Mammary epithelial cell (primary cell): ENCODE measurements at regions of chr1 and their contacts with region 1.

Region 1: DNA sequence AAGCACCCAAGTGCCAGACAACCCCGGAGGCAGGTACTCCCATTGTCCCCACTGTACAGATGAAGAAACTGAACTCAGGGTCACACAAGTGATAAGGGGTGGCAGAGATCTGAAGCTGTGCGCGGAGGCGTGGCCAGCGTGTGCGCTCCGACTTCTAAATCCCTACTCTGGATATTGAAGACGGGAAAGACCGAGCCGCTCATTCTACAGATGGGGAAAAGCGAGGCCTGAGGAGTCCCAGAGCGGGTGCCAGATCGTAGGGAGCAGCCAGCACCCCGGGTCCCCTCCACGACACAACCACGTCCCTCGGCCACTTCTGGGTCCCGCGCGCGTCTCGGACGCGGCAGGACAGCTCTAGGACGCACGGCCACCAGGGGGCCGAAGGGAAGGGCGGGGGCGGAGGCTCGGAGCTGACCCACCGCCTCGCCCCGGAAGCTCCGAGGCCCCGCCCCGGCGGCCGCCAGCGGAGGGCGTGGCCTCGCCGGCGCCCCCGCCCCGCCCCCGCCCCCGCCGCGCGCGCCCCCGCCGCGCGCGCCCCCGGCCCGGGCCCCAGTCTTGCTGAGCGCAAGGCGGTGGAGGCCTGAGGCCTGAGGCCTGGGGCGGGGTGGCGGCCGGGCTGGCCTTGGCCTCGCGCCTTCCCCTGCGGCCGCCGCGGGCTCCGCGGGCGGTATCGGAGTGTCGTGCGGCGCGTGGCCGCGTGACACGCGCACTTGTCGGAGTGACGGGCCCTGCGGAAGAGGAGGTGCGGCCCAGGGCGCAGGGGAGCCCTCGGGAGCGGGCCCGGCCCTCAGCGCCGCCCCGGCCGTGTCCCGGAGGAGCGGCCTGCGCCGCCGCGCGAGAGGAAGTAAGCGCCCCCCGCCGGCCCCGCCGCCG is at the start of gene H6PD:
- DNase-seq: peak; percentile 74
- H3K4me3 ChIP-seq: peak within 1 kb of the TSS; percentile 52 to 66 (median 65)
- H3K27ac ChIP-seq: peak within 1 kb of the TSS; percentile 64
- H3K4me1 ChIP-seq: peaks cover 29% of the 10 kb centered on the region
- H3K27me3 ChIP-seq: no peaks in the 10 kb centered on the region
- CTCF ChIP-seq: peak; percentile 37 to 75
- total RNA-seq, gene H6PD: 12.6 to 18.0 TPM

Region 2: DNA sequence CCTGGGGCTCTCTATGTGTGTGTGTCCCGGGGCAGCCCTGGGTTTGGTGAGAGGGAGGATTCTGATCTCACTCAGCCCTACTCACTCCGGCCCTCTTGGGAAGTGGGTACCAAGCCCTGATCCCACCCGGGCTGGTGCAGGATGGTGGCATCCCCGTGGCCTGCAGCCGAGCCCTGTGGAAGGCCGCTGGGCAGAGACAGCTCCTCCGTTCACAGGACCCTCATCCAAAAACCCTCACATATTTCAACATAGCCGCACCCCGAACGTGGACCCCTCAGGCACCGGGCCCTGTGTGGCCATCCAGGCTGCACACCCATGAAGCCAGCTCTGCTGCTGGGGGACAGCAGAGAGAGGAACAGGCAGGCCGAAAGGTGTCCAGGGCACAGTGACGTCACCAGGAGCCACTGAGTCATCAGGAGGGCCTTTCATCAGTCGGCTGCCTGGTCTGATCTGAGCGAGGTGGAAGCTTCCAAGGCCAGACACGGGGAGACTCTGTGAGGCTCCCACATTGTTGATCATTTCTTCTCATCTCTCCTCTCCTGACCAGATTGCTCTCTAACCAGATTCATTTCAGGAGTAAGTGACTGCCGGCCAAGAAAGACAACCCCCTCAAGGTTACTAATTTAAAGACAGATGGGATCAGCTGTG is 89.3 kb before region 1 on chr1:
- CTCF ChIA-PET with region 1: no interaction called
- dilution Hi-C with region 1: no loop called
- in situ Hi-C with region 1: no loop called
- intact Hi-C with region 1: no loop called
- DNase-seq: peak; percentile 23
- H3K4me3 ChIP-seq: no peak overlapping the region
- H3K27ac ChIP-seq: no peak overlapping the region
- H3K4me1 ChIP-seq: peaks cover 5% of the 10 kb centered on the region
- H3K27me3 ChIP-seq: no peaks in the 10 kb centered on the region
- CTCF ChIP-seq: no peak

Region 3: GRCh38 chr1:9155879-9156278 is 78.6 kb before region 1 on chr1:
- CTCF ChIA-PET with region 1: no interaction called
- dilution Hi-C with region 1: loop called (anchors 5 kb)
- in situ Hi-C with region 1: no loop called
- intact Hi-C with region 1: no loop called
- DNase-seq: no peak
- H3K4me3 ChIP-seq: no peak overlapping the region
- H3K27ac ChIP-seq: no peak overlapping the region
- H3K4me1 ChIP-seq: no peaks in the 10 kb centered on the region
- H3K27me3 ChIP-seq: no peaks in the 10 kb centered on the region
- CTCF ChIP-seq: no peak

Region 4: GRCh38 chr1:9181176-9181906 is 53.1 kb before region 1 on chr1:
- CTCF ChIA-PET with region 1: no interaction called
- dilution Hi-C with region 1: no loop called
- in situ Hi-C with region 1: no loop called
- intact Hi-C with region 1: loop called (anchors 2 kb)
- DNase-seq: peak; percentile 52
- H3K4me3 ChIP-seq: peak overlapping the region; percentile 92 to 98 (median 94)
- H3K27ac ChIP-seq: peak overlapping the region; percentile 91
- H3K4me1 ChIP-seq: peaks cover 27% of the 10 kb centered on the region
- H3K27me3 ChIP-seq: no peaks in the 10 kb centered on the region
- CTCF ChIP-seq: peak; percentile 84 to 96

Region 5: DNA sequence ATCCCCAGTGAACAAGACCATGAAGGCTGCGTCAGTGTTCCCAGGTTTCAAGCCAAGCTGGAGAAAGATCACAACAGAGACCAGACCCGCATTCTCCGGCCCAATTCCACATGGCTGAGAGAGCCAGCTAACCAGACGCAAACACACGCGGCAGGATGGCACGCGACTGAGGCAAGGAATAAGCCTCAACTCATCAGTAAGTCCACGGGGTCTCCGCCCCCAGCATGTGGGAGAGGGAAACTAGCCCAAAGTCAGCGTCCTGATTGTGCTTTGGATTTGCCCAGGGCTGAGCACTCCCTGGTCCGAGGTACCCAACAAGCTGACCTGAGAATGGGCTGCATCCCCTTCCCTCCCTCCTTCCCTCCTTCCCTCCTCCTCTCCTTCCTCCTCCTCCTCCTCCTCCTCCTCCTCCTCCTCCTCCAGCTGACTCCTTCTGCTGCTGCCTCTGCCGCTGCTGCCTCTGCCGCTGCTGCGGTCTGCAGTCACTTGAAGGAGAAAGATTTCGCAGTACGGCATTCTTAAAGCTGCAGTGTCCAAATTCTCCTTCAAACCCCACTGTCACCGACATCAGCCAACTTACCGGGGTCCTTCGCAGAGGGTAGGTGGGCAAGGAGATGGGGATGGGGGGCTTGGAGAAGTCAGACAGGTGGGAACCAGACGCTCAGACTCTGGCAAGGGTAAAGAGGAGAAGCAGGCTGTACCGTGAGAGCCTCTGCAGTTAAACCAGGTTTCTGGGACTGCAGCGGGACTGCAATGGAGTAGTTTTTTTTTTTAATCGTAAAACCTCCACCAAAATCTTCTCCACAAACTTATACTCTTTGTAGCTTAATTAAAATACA is 32.8 kb before region 1 on chr1:
- CTCF ChIA-PET with region 1: interaction called, 3 read pairs
- dilution Hi-C with region 1: no loop called
- in situ Hi-C with region 1: no loop called
- intact Hi-C with region 1: loop called (anchors 1 kb)
- DNase-seq: peak; percentile 41
- H3K4me3 ChIP-seq: peak overlapping the region; percentile 54 to 61 (median 54)
- H3K27ac ChIP-seq: no peak overlapping the region
- H3K4me1 ChIP-seq: peaks cover 54% of the 10 kb centered on the region
- H3K27me3 ChIP-seq: no peaks in the 10 kb centered on the region
- CTCF ChIP-seq: no peak

Region 6: GRCh38 chr1:9371391-9371935 is 137.0 kb after region 1 on chr1:
- CTCF ChIA-PET with region 1: no interaction called
- dilution Hi-C with region 1: no loop called
- in situ Hi-C with region 1: no loop called
- intact Hi-C with region 1: no loop called
- DNase-seq: no peak
- H3K4me3 ChIP-seq: no peak overlapping the region
- H3K27ac ChIP-seq: no peak overlapping the region
- H3K4me1 ChIP-seq: peaks cover 10% of the 10 kb centered on the region
- H3K27me3 ChIP-seq: no peaks in the 10 kb centered on the region
- CTCF ChIP-seq: no peak